ENCODE measurements at regions of chr5 and their contacts with region 1.

Region 1: GRCh38 chr5:131281133-131281867 is 17.4 kb downstream of the CDC42SE2 start:
- DNase-seq: peak in 3 of 14 experiments; percentile 84 to 91 (median 90)
- ATAC-seq: peak; percentile 81
- H3K4me3 ChIP-seq: peak overlapping the region; percentile 52
- H3K4me3 Mint-ChIP-seq: peak overlapping the region; percentile 74
- H3K27ac ChIP-seq: peak overlapping the region; percentile 39 to 76
- H3K27ac Mint-ChIP-seq: peak overlapping the region; percentile 77
- H3K4me1 ChIP-seq: peaks cover 60% of the 10 kb centered on the region
- H3K4me1 Mint-ChIP-seq: peaks cover 80% of the 10 kb centered on the region
- H3K27me3 ChIP-seq: no peaks in the 10 kb centered on the region
- H3K27me3 Mint-ChIP-seq: no peaks in the 10 kb centered on the region
- CTCF ChIP-seq: no peak

Region 2: DNA sequence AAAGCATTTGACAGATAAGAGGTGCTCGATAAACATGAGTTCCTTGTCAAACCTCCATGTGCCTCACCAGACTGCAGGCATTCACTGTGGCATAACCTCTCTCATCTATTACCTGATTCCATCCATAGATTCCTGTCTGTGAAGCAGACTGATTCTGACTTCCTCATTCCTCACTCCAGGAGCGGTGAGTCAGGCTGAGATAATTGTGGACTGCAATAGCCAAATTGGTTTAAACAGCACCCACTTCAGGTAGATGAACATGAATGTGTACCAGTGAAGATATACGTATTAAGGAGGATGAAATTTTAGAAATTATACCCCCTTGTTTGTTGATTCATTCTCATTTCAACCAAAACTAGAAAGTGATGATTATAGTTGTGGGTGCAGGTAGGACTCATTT is 507.5 kb before region 1 on chr5:
- CTCF ChIA-PET with region 1: no interaction called
- POLR2A ChIA-PET with region 1: no interaction called
- intact Hi-C with region 1: no loop called
- DNase-seq: peak in 1 of 14 experiments; percentile 2
- ATAC-seq: no peak
- H3K4me3 ChIP-seq: no peak overlapping the region
- H3K4me3 Mint-ChIP-seq: no peak overlapping the region
- H3K27ac ChIP-seq: no peak overlapping the region
- H3K27ac Mint-ChIP-seq: no peak overlapping the region
- H3K4me1 ChIP-seq: no peaks in the 10 kb centered on the region
- H3K4me1 Mint-ChIP-seq: no peaks in the 10 kb centered on the region
- H3K27me3 ChIP-seq: peaks cover 0 to 7% of the 10 kb centered on the region in 2 experiments
- H3K27me3 Mint-ChIP-seq: peaks cover 44% of the 10 kb centered on the region
- CTCF ChIP-seq: no peak

Region 3: DNA sequence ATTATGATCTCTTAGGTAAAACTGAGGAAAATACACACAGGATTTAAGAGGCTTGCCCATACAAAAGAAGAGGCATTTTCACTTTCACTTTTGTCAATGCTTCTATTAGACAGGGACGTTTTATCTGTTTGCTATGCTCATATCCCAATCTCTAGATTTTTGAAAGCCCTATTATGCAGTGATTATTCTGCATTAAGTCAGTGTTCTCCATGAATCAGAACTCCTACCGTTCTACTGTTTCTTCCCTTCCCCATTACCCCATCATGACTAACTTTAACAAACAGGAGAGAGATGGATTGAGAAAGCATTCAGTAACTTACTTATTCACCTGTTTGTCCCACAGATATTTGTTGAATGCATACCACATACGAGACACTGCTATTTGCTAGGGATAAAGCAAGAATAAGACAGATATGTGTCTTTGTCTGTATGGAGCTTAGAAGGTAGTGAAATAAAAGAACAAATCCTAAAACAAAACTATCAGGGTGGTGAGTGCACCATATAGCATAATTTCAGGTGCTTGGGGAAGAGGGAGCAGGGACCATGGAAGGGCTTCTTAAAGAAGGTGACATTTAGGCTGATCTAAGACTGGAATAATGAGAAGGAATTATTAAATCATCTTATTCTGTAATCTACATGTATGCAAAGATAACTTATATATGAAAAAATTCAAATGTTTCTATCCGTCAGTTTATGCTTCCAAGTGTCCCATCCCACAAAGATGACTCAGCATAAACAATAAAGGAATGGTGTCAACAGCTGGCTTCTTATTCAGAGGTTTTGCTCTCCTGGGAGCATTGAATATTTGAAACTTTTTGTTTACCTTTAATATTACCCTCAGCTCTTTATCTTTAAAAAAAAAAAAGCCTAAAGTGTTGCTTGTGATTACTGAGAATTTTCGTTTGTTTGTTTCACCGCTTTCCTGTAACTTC is 444.3 kb before region 1 on chr5:
- CTCF ChIA-PET with region 1: no interaction called
- POLR2A ChIA-PET with region 1: no interaction called
- intact Hi-C with region 1: no loop called
- DNase-seq: peak in 3 of 14 experiments; percentile 14 to 37 (median 16)
- ATAC-seq: no peak
- H3K4me3 ChIP-seq: peak overlapping the region; percentile 42
- H3K4me3 Mint-ChIP-seq: peak overlapping the region; percentile 89
- H3K27ac ChIP-seq: no peak overlapping the region
- H3K27ac Mint-ChIP-seq: peak overlapping the region; percentile 34
- H3K4me1 ChIP-seq: no peaks in the 10 kb centered on the region
- H3K4me1 Mint-ChIP-seq: peaks cover 23% of the 10 kb centered on the region
- H3K27me3 ChIP-seq: no peaks in the 10 kb centered on the region
- H3K27me3 Mint-ChIP-seq: no peaks in the 10 kb centered on the region
- CTCF ChIP-seq: no peak

Region 4: DNA sequence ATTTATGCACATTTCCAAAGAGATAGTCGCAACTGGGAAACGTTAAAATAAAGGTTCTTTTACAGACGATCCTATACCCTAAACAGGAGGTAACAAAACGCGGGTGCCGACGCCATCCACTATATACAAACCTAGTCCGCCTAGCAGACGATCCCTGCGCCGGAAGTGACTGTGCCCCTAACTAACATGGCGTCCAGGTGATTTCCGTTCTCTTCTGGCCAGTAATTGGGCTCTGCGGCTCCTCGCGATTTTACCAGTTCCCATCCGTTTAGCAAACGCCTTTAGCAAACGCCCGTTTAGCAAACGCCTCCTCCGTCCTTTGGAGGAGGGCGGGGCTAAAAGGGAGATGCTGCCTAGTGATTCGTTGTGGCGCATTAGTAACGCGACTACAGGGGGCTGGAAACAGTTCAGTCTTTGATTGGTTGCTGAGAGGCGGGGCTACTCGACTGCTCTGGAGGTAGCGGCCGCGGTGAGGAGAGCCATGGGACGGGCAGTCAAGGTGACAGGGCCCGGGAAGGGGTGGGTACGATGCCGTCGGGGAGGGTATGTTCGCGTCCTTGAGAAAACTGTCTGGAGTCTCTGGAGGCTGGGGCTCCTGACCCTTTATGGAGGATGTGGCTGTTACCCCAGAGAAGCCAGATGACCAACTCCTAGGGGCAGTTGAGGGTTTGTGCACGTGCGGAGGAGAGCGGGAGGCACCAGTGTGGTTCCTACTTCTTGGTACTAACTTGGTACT is 110.6 kb before region 1 on chr5 and contains the start of gene LYRM7:
- CTCF ChIA-PET with region 1: interaction called, 5 read pairs
- POLR2A ChIA-PET with region 1: interaction called, 5 read pairs
- intact Hi-C with region 1: loop called in 1 of 2 experiments (anchors 5 kb)
- DNase-seq: peak; percentile 88 to 99 (median 92)
- ATAC-seq: peak; percentile 94
- H3K4me3 ChIP-seq: peak within 1 kb of the TSS; percentile 73
- H3K4me3 Mint-ChIP-seq: peak within 1 kb of the TSS; percentile 98
- H3K27ac ChIP-seq: peak within 1 kb of the TSS; percentile 70 to 74
- H3K27ac Mint-ChIP-seq: peak within 1 kb of the TSS; percentile 94
- H3K4me1 ChIP-seq: peaks cover 16% of the 10 kb centered on the region
- H3K4me1 Mint-ChIP-seq: peaks cover 55% of the 10 kb centered on the region
- H3K27me3 ChIP-seq: no peaks in the 10 kb centered on the region
- H3K27me3 Mint-ChIP-seq: no peaks in the 10 kb centered on the region
- CTCF ChIP-seq: no peak
- total RNA-seq, gene LYRM7: 8.3 to 11.9 TPM

Region 5: GRCh38 chr5:131258733-131259132 is 22.6 kb before region 1 on chr5:
- CTCF ChIA-PET with region 1: no interaction called
- POLR2A ChIA-PET with region 1: interaction called, 390 read pairs
- intact Hi-C with region 1: loop called in 1 of 2 experiments (anchors 1 kb)
- DNase-seq: no peak
- ATAC-seq: no peak
- H3K4me3 ChIP-seq: no peak overlapping the region
- H3K4me3 Mint-ChIP-seq: peak overlapping the region; percentile 70
- H3K27ac ChIP-seq: peak overlapping the region; percentile 58 to 66
- H3K27ac Mint-ChIP-seq: peak overlapping the region; percentile 90
- H3K4me1 ChIP-seq: peaks cover 57% of the 10 kb centered on the region
- H3K4me1 Mint-ChIP-seq: peaks cover 73% of the 10 kb centered on the region
- H3K27me3 ChIP-seq: no peaks in the 10 kb centered on the region
- H3K27me3 Mint-ChIP-seq: no peaks in the 10 kb centered on the region
- CTCF ChIP-seq: no peak

Region 6: GRCh38 chr5:131270809-131271208 is 10.5 kb before region 1 on chr5:
- CTCF ChIA-PET with region 1: interaction called, 19 read pairs
- POLR2A ChIA-PET with region 1: interaction called, 390 read pairs
- intact Hi-C with region 1: loop called in 1 of 2 experiments (anchors 1 kb)
- DNase-seq: no peak
- ATAC-seq: no peak
- H3K4me3 ChIP-seq: peak overlapping the region; percentile 41
- H3K4me3 Mint-ChIP-seq: peak overlapping the region; percentile 81
- H3K27ac ChIP-seq: peak overlapping the region; percentile 75 to 87
- H3K27ac Mint-ChIP-seq: peak overlapping the region; percentile 85
- H3K4me1 ChIP-seq: peaks cover 64% of the 10 kb centered on the region
- H3K4me1 Mint-ChIP-seq: peaks cover 65% of the 10 kb centered on the region
- H3K27me3 ChIP-seq: no peaks in the 10 kb centered on the region
- H3K27me3 Mint-ChIP-seq: no peaks in the 10 kb centered on the region
- CTCF ChIP-seq: no peak

Region 7: GRCh38 chr5:131328536-131329285 is 47.4 kb after region 1 on chr5:
- CTCF ChIA-PET with region 1: interaction called, 4 read pairs
- POLR2A ChIA-PET with region 1: interaction called, 3 read pairs
- intact Hi-C with region 1: loop called in 1 of 2 experiments (anchors 5 kb)
- DNase-seq: no peak
- ATAC-seq: peak; percentile 24
- H3K4me3 ChIP-seq: no peak overlapping the region
- H3K4me3 Mint-ChIP-seq: peak overlapping the region; percentile 26
- H3K27ac ChIP-seq: no peak overlapping the region
- H3K27ac Mint-ChIP-seq: peak overlapping the region; percentile 26
- H3K4me1 ChIP-seq: peaks cover 31% of the 10 kb centered on the region
- H3K4me1 Mint-ChIP-seq: peaks cover 84% of the 10 kb centered on the region
- H3K27me3 ChIP-seq: no peaks in the 10 kb centered on the region
- H3K27me3 Mint-ChIP-seq: no peaks in the 10 kb centered on the region
- CTCF ChIP-seq: no peak

Region 8: DNA sequence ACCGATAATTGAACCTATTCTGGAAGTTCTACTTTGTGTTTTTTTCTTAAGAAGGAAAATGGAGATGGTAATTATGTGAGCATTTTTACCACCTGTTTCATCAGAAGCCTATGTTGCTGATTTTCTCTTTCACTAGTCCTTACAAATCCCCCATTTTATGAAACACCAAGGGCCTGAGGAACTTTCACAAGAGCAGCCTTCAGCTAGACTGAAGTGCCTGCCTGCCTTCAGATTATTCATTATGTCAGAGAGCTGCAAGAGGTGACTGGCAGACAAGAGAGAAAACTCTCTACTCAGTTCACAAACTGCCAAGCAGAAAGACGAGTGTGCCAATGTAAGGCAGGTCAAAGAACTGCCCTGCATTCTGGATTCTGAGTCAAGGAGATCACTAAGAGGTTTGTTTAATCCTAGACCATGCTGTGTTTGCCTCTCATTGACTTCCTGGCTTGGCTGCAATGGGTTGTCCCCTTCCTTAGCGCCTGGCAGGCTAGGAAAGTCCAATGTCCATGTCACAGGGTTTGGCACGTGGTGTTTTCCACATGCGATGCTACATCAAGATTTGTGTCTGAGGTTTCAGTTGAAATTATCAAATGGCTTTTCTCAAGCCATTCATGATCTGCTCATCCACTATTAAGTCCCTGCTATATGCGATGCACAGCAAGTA is 125.8 kb after region 1 on chr5:
- CTCF ChIA-PET with region 1: no interaction called
- POLR2A ChIA-PET with region 1: no interaction called
- intact Hi-C with region 1: no loop called
- DNase-seq: no peak
- ATAC-seq: no peak
- H3K4me3 ChIP-seq: no peak overlapping the region
- H3K4me3 Mint-ChIP-seq: no peak overlapping the region
- H3K27ac ChIP-seq: no peak overlapping the region
- H3K27ac Mint-ChIP-seq: peak overlapping the region; percentile 47
- H3K4me1 ChIP-seq: no peaks in the 10 kb centered on the region
- H3K4me1 Mint-ChIP-seq: peaks cover 13% of the 10 kb centered on the region
- H3K27me3 ChIP-seq: no peaks in the 10 kb centered on the region
- H3K27me3 Mint-ChIP-seq: no peaks in the 10 kb centered on the region
- CTCF ChIP-seq: no peak

Region 9: GRCh38 chr5:131579917-131580671 is 298.8 kb after region 1 on chr5:
- CTCF ChIA-PET with region 1: no interaction called
- POLR2A ChIA-PET with region 1: no interaction called
- intact Hi-C with region 1: no loop called
- DNase-seq: no peak
- ATAC-seq: no peak
- H3K4me3 ChIP-seq: no peak overlapping the region
- H3K4me3 Mint-ChIP-seq: no peak overlapping the region
- H3K27ac ChIP-seq: no peak overlapping the region
- H3K27ac Mint-ChIP-seq: no peak overlapping the region
- H3K4me1 ChIP-seq: peaks cover 4% of the 10 kb centered on the region
- H3K4me1 Mint-ChIP-seq: peaks cover 62% of the 10 kb centered on the region
- H3K27me3 ChIP-seq: no peaks in the 10 kb centered on the region
- H3K27me3 Mint-ChIP-seq: no peaks in the 10 kb centered on the region
- CTCF ChIP-seq: no peak

Measured in CD4-positive, alpha-beta T cell (primary cell).